ENCODE measurements at regions of chr9 and their contacts with region 1.

Region 1: GRCh38 chr9:96150324-96151227 is 151.4 kb downstream of the HSD17B3 start:
- DNase-seq: peak; percentile 52
- H3K4me3 Mint-ChIP-seq: peak overlapping the region; percentile 44
- H3K27ac Mint-ChIP-seq: peak overlapping the region; percentile 74
- H3K4me1 Mint-ChIP-seq: peaks cover 41% of the 10 kb centered on the region
- H3K27me3 Mint-ChIP-seq: peaks cover 9% of the 10 kb centered on the region

Region 2: DNA sequence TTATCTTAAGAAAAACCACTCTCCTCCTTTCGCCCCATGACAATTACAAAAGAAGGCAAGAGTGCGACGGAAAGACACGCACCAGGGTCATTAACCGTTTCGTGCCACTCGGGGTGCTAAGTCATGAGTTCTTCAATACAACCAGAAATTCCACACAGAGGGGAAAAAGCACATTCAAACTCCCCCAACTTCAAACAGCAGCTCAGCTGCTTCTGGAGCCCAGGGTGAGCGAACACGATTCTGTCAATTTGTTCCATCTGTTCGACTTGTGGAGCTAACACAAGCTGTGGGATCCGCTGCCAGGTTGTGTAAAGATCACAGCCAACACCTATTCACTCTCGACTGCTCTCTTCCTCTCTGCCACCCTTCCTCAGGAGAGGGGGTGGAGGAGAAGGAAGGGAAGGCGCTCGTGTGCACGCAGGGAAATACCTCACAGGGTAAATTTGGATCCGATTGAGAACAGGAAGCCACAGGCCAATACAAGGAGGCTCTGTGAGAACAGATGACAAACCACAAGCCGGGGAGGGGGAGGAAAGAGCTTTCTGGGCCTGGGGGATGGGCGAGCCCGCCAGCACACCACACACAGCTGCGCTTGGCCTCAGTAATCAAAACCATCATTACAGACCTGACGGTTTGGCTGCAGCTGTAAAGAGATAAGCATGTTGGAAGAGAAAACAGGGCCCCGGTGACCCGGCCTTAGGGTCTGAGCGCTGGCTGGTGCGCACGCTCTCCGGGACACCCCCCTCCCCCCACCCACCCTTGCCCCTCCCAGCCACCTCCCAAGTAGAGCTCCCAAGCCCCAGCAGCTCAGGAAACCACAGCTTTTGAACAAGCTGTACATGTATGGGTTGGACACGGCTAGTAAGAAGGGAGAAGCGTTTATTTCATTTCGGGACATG is 688.1 kb before region 1 on chr9:
- intact Hi-C with region 1: loop called (anchors 1 kb)
- DNase-seq: peak; percentile 81
- H3K4me3 Mint-ChIP-seq: peak overlapping the region; percentile 71
- H3K27ac Mint-ChIP-seq: peak overlapping the region; percentile 21
- H3K4me1 Mint-ChIP-seq: peaks cover 29% of the 10 kb centered on the region
- H3K27me3 Mint-ChIP-seq: peaks cover 43% of the 10 kb centered on the region

Region 3: GRCh38 chr9:95852059-95853032 is 298.2 kb before region 1 on chr9:
- intact Hi-C with region 1: loop called (anchors 1 kb)
- DNase-seq: no peak
- H3K4me3 Mint-ChIP-seq: peak overlapping the region; percentile 23
- H3K27ac Mint-ChIP-seq: no peak overlapping the region
- H3K4me1 Mint-ChIP-seq: peaks cover 45% of the 10 kb centered on the region
- H3K27me3 Mint-ChIP-seq: no peaks in the 10 kb centered on the region

Region 4: DNA sequence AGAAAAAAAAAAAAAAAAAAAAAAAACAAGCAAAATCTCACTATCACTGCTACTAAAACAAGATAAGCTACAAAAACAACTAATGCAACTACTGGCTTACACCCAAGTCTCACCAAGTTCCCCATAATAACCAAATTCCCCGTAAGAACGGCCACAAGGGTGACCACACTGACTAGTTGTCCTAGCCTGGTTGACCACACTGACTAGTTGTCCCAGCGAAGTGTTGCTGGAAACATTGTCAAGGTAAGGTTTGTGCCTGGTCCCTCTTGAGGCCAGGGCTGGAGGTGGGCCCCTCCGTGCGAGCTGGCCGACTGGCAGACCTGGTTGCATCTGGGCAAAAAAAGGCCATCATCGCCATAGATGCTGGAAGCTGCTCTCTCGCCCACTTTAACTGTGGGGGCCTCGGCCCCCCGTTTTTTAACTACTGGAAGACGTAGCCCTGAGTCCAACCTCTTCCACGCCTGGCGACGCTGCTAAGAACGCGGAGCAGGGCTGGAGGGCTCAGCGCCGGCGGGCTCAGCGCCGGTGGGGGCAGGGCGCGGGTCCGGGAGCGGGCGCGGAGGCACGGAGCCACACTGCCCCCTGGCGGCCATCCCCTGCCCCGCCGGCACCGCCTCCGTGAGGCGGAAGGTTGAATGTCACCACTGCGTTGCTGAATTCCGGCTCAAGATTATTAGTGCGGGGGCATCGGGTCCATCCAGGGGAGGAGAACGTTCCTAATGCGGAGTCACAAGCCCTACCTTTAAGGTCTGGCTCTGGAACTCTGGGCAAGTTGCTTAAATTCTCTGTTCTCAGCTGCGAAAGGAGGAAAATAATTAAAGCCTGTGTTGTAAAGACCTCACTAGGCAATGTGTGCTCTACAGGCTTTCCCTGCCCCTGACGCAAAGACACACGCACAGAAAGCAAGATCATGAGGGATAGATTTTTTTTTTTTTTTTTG is 67.4 kb after region 1 on chr9:
- intact Hi-C with region 1: loop called (anchors 5 kb)
- DNase-seq: peak; percentile 64
- H3K4me3 Mint-ChIP-seq: peak overlapping the region; percentile 67
- H3K27ac Mint-ChIP-seq: no peak overlapping the region
- H3K4me1 Mint-ChIP-seq: peaks cover 13% of the 10 kb centered on the region
- H3K27me3 Mint-ChIP-seq: peaks cover 60% of the 10 kb centered on the region

Measured in activated T-helper 2 cell treated with anti-CD3 and anti-CD28 coated beads, Interferon-gamma antibody, Interleukin-2, Interleukin-4, amounts not matched to agents 10 μg/mL and 5 μg/mL and 100 μg/mL, durations not matched to agents 14 hours and 24 hours and 36 hours (primary cell).